Gastrocnemius medialis (tissue), 4 donors: ENCODE measurements at regions of chr7 and their contacts with region 1.

Region 1: DNA sequence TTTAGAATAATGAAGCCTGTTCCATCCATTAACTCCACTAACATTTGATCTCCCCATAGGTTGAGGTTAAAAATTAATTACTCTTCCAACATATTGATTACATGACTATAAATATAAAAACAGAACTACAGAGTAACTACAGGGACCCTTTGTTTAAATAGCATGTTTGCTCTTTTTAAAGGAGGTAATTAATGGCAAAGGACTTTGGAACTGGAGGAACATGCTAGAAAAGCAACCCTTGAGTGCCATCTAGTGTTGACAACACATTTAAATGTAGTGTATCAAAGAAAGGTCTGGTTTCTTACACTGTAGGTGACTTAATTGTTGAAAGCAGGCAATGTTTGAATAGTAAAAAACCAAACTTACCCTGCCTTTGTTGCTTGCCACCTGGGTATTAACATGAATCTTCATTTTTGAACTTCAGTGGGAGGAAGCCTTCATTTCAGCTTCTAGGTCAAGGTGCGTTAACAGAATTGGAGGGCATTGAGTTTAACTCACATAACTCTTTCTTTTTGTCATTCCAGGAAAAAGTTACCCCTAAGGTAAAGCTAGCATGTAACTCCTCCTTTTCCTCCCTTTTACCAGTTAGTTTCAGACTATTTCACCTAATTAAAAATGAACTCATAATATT is 52.6 kb upstream of the CAPZA2 start:
- DNase-seq: no peak
- ATAC-seq: peak; percentile 61
- H3K4me3 ChIP-seq: no peak overlapping the region
- H3K27ac ChIP-seq: peak overlapping the region; percentile 69 to 81 (median 75)
- H3K4me1 ChIP-seq: peaks cover 12 to 22% of the 10 kb centered on the region in 2 donors
- H3K27me3 ChIP-seq: no peaks in the 10 kb centered on the region
- CTCF ChIP-seq: peak; percentile 65 to 78 (median 72)
- POLR2A ChIP-seq: no peak

Region 2: GRCh38 chr7:116173051-116174028 is 636.4 kb before region 1 on chr7:
- in situ Hi-C with region 1: loop called in 3 of 4 experiments (anchors 25 kb)
- intact Hi-C with region 1: loop called (anchors 5 kb)
- DNase-seq: no peak
- ATAC-seq: peak in 1 of 2 donors; percentile 46
- H3K4me3 ChIP-seq: no peak overlapping the region
- H3K27ac ChIP-seq: no peak overlapping the region
- H3K4me1 ChIP-seq: no peaks in the 10 kb centered on the region
- H3K27me3 ChIP-seq: no peaks in the 10 kb centered on the region
- CTCF ChIP-seq: peak in 4 of 5 experiments; percentile 20 to 53 (median 42)
- POLR2A ChIP-seq: no peak

Region 3: GRCh38 chr7:116265881-116266280 is 543.9 kb before region 1 on chr7:
- in situ Hi-C with region 1: loop called in 2 of 4 experiments (anchors 5 to 10 kb)
- intact Hi-C with region 1: loop called (anchors 5 kb)
- DNase-seq: no peak
- ATAC-seq: no peak
- H3K4me3 ChIP-seq: no peak overlapping the region
- H3K27ac ChIP-seq: no peak overlapping the region
- H3K4me1 ChIP-seq: peaks cover 1 to 5% of the 10 kb centered on the region in 2 donors
- H3K27me3 ChIP-seq: no peaks in the 10 kb centered on the region
- CTCF ChIP-seq: no peak
- POLR2A ChIP-seq: no peak

Region 4: DNA sequence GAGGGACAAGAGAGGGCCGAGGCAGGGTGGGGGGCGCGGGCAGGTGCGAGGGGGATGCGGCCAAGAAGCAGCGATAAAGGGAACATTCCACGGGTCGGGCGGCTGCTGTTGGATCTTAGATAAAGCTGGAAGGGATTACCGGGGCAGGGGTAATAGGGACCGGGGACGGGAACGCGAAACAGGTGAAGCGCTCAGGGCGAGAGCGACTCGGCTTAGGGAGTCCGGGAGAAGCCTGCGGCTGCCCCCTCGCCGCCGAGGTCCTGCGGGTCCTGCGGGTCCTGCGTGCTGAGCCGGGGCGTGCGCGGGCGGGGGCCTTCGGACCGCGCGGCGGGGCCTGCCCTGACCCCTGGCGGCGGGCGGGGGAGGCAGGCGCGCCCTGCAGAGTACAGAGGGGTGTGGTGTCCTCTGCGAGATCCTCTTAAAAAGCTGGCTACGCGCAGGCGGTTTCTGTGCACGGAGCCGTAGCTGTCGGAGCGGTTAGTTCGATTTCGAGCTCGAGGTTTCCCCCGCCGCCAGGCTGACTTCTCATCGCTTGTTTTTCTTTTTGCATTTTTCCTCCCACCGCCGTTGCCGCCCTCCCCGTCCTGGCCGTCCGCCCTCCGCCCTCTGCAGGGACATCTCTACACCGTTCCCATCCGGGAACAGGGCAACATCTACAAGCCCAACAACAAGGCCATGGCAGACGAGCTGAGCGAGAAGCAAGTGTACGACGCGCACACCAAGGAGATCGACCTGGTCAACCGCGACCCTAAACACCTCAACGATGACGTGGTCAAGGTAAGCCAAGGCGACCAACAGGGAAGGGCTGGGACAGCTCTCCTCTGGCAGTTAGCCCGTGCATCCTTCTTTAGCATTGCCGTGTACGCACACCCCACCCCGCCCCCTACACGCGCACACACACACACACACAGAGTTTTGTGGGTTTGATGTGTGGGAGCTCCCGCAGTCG is 283.6 kb before region 1 on chr7:
- in situ Hi-C with region 1: no loop called
- intact Hi-C with region 1: loop called (anchors 5 kb)
- DNase-seq: peak; percentile 53 to 55
- ATAC-seq: peak; percentile 72 to 80
- H3K4me3 ChIP-seq: peak overlapping the region; percentile 59 to 79 (median 70)
- H3K27ac ChIP-seq: peak overlapping the region; percentile 82 to 85 (median 82)
- H3K4me1 ChIP-seq: peaks cover 0 to 14% of the 10 kb centered on the region in 2 donors
- H3K27me3 ChIP-seq: no peaks in the 10 kb centered on the region
- CTCF ChIP-seq: peak; percentile 67 to 95 (median 88)
- POLR2A ChIP-seq: peak; percentile 43 to 58

Region 5: DNA sequence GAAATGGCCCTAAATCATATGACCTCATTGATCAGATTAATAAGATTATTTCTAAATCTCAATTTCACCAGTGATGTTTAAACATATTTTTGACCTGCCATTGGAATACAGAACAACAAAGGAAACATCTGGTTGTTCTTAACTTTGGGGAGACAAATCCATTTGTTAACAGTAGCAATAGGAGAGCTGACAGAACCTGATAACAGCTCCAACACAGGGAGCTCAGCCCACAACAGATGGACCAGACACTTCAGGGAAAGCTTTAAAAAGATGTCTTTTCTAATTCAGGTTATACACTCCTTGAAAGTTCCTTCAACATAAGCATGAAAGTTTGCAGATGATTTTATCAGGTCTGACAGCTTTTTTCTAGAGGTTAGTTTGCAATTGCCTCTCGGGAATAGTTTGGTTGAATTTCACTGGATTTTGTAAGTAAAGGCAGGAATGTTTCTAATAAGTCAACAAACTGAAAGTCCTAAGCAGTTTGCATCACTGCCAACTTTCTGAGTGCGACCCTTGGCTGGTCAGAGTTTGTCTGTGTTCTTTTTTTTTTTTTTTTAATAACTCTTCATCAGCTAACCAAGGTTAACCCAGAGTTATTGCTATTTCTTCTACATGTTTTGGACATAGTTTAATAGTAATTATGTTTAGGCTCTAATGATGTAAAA is 144.3 kb before region 1 on chr7:
- in situ Hi-C with region 1: loop called in 3 of 4 experiments (anchors 5 kb)
- intact Hi-C with region 1: no loop called
- DNase-seq: no peak
- ATAC-seq: no peak
- H3K4me3 ChIP-seq: no peak overlapping the region
- H3K27ac ChIP-seq: no peak overlapping the region
- H3K4me1 ChIP-seq: peaks cover 12 to 14% of the 10 kb centered on the region in 2 donors
- H3K27me3 ChIP-seq: no peaks in the 10 kb centered on the region
- CTCF ChIP-seq: no peak
- POLR2A ChIP-seq: no peak

Region 6: DNA sequence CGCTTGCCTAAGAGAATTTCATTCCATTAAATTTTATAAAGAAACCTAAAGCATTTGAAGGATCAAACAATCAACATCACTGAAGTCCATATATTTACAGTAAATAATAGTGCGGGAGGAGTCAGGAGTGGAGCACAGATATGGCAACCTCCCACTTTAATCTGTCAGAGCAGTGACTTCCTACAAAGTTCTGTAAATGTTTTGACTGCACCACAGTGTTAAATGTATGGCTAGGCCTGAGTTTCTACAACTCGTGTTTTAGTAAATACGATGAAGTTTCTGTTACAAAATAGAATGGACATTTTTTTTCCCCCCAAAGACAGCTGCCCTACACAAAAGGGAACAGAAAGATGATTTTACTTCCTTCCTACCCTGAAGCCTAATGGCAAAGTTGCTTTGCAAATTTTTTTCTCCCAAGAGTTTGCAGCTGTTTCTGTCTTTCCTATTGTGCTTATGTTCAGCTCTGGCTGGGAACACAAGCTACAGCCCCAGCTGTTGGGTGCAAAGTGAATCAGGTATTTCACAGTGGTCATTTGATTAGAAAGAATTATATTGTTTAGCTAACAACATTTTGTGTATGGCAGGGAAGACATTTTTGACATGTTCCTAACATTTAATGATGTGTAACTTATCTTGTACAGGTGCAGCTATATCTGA is 75.7 kb before region 1 on chr7:
- in situ Hi-C with region 1: no loop called
- intact Hi-C with region 1: loop called (anchors 5 kb)
- DNase-seq: no peak
- ATAC-seq: peak; percentile 46 to 60
- H3K4me3 ChIP-seq: no peak overlapping the region
- H3K27ac ChIP-seq: peak overlapping the region in 3 of 4 donors; percentile 23 to 53 (median 25)
- H3K4me1 ChIP-seq: peaks cover 48 to 50% of the 10 kb centered on the region in 2 donors
- H3K27me3 ChIP-seq: no peaks in the 10 kb centered on the region
- CTCF ChIP-seq: no peak
- POLR2A ChIP-seq: no peak